ENCODE measurements at regions of chr13 and their contacts with region 1.

Region 1: GRCh38 chr13:113490496-113491417 is at the start of gene DCUN1D2:
- DNase-seq: peak; percentile 99
- H3K4me3 ChIP-seq: peak within 1 kb of the TSS; percentile 65 to 83
- H3K27ac ChIP-seq: peak within 1 kb of the TSS; percentile 84 to 87
- H3K4me1 ChIP-seq: peaks cover 24 to 49% of the 10 kb centered on the region in 2 experiments; a peak in 3 of 4 replicates
- H3K27me3 ChIP-seq: no peaks in the 10 kb centered on the region
- CTCF ChIP-seq: no peak
- EP300 ChIP-seq: 0 out of 4 replicates have a peak, but pooled peaks of 1 of the 2 experiments have one; percentile 8
- RAD21 ChIP-seq: no peak
- polyA plus RNA-seq, gene DCUN1D2: 11.0 and 13.0 TPM in 2 replicates

Region 2: DNA sequence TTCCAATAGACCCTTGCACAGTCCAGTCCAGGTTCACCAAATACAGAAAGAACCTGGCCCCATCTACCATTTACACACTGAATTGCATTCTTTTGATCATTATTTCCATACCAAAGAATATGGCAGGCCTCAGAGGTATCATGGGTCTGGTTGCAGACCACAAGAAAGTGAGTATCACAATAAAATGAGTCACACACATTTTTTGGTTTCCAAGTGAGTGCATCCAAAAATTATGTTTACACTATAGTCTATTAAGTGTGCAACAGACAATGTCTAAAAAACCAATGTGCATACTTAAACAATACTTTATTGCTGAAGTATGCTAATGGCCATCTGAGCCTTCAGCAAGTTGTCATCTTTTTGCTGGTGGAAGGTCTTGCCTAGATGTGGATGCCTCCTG is 1009.3 kb before region 1 on chr13:
- CTCF ChIA-PET with region 1: no interaction called
- POLR2A ChIA-PET with region 1: no interaction called
- DNase-seq: no peak
- H3K4me3 ChIP-seq: no peak overlapping the region
- H3K27ac ChIP-seq: no peak overlapping the region
- H3K4me1 ChIP-seq: no peaks in the 10 kb centered on the region
- H3K27me3 ChIP-seq: no peaks in the 10 kb centered on the region
- CTCF ChIP-seq: no peak
- EP300 ChIP-seq: no peak
- RAD21 ChIP-seq: no peak

Region 3: GRCh38 chr13:113477724-113478123 is 13.0 kb before region 1 on chr13:
- CTCF ChIA-PET with region 1: interaction called, 11 read pairs
- POLR2A ChIA-PET with region 1: interaction called, 4 read pairs
- DNase-seq: no peak
- H3K4me3 ChIP-seq: no peak overlapping the region
- H3K27ac ChIP-seq: no peak overlapping the region
- H3K4me1 ChIP-seq: no peaks in the 10 kb centered on the region; a peak in 1 of 4 replicates
- H3K27me3 ChIP-seq: no peaks in the 10 kb centered on the region
- CTCF ChIP-seq: no peak
- EP300 ChIP-seq: no peak
- RAD21 ChIP-seq: no peak

Region 4: DNA sequence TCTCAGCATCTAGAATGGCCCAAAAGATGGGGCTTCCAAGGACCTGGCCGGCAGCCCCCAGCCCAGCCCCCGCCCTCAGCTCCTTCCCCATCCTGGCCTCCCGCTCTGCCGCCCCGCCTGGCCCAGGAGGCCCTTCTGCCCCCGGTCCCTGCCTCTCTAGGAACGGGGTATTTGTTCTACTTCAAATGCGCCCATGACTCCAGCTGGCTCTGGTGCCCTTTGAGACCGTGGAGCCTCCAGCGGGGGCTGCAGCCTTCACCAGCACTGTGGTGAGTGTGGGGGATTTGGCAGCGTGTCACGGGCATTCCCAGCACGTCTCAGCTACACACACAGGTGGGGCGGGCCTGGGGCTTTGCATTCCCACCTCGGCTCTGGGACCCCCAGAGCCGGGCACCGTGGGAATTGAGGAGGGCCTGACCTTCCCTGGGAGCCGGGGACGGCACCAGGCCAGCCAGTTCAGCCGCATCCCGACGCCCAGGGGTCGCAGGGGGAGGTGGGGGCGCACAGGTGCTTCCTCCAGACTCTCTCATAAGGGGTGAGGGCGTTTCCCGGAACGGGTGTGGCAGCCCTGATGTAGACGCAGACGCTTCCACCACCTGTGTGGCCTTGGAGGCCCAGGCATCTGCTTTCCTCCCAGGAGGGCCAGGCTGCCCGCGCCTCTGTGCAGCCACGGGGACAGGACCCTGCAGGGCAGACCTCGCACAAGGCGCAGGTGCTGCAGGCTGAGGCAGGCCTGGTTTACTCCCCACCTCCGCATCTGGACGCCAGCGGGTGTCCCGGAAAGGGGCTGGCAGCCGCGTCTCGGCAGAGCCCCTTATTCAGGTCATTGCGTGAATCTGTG is 166.3 kb after region 1 on chr13:
- CTCF ChIA-PET with region 1: no interaction called
- POLR2A ChIA-PET with region 1: no interaction called
- DNase-seq: no peak
- H3K4me3 ChIP-seq: no peak overlapping the region
- H3K27ac ChIP-seq: no peak overlapping the region
- H3K4me1 ChIP-seq: peaks cover 0 to 7% of the 10 kb centered on the region in 2 experiments; a peak in 1 of 4 replicates
- H3K27me3 ChIP-seq: no peaks in the 10 kb centered on the region
- CTCF ChIP-seq: no peak
- EP300 ChIP-seq: no peak
- RAD21 ChIP-seq: no peak

Measured in SK-N-SH (cell line).